ENCODE measurements at regions of chr7 and their contacts with region 1.

Region 1: GRCh38 chr7:23696916-23697441 is 13.0 kb upstream of the STK31 start:
- DNase-seq: peak; percentile 50 to 69
- H3K4me3 ChIP-seq: no peak overlapping the region
- H3K27ac ChIP-seq: no peak overlapping the region
- H3K4me1 ChIP-seq: peaks cover under 1% of the 10 kb centered on the region; the same call in 1 of the 2 replicates
- H3K27me3 ChIP-seq: no peaks in the 10 kb centered on the region
- CTCF ChIP-seq: peak; percentile 93

Region 2: DNA sequence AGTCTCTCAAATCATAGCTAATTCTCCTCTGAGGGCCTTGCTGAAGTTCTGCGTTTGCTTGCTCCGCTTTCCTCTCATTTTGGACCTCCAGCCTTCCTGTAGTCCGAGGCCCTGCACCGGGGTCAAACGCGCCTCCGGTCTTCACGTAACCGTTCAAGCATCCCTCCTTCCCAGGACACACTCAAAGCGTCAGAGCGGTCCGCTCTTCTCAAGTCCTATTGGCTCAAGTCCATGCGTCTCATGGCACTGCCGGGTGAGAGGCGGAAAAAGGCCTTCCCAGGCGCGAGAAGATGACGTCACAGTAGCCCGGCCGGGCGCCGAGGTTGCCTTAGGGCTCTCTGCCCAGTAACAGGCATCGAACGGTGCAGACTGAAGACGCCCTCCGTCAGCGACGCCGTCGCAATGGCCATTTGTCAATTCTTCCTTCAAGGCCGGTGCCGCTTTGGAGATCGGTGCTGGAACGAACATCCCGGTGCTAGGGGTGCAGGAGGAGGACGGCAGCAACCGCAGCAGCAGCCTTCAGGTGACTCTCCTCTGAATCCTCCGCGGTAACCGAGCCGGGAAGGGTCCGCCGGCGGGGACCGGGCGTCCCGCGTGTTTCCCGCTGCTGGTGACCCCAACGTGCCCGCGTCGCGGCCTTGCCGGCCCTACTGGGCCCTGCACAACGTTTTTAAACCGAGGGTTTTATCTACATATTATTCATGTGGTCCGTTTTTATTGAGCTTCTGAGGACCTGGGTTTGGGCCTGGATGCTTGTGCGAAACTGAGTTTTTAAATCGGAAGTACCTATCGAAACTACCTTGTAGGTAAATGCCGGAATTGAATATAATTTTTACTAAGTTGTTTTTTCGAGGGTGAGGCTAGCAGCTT is 515.1 kb before region 1 on chr7 and contains the start of gene NUP42:
- CTCF ChIA-PET with region 1: no interaction called
- POLR2A ChIA-PET with region 1: no interaction called
- intact Hi-C with region 1: loop called (anchors 10 kb)
- DNase-seq: peak; percentile 99 to 100
- H3K4me3 ChIP-seq: peak within 1 kb of the TSS; percentile 98
- H3K27ac ChIP-seq: peak within 1 kb of the TSS; percentile 87
- H3K4me1 ChIP-seq: peaks cover 27% of the 10 kb centered on the region
- H3K27me3 ChIP-seq: no peaks in the 10 kb centered on the region
- CTCF ChIP-seq: no peak
- total RNA-seq, gene NUP42: 41.3 and 51.3 TPM in 2 replicates